HEK293 (cell line): ENCODE measurements at regions of chr19 and their contacts with region 1.

Region 1: GRCh38 chr19:51514866-51515481 is 13.4 kb upstream of the SIGLEC12 start:
- H3K4me3 ChIP-seq: no peak overlapping the region
- H3K27ac ChIP-seq: no peak overlapping the region
- H3K4me1 ChIP-seq: no peaks in the 10 kb centered on the region
- CTCF ChIP-seq: no peak

Region 2: GRCh38 chr19:51389143-51389542 is 125.8 kb before region 1 on chr19:
- CTCF ChIA-PET with region 1: no interaction called
- POLR2A ChIA-PET with region 1: no interaction called
- H3K4me3 ChIP-seq: no peak overlapping the region
- H3K27ac ChIP-seq: no peak overlapping the region
- H3K4me1 ChIP-seq: no peaks in the 10 kb centered on the region
- CTCF ChIP-seq: no peak

Region 3: DNA sequence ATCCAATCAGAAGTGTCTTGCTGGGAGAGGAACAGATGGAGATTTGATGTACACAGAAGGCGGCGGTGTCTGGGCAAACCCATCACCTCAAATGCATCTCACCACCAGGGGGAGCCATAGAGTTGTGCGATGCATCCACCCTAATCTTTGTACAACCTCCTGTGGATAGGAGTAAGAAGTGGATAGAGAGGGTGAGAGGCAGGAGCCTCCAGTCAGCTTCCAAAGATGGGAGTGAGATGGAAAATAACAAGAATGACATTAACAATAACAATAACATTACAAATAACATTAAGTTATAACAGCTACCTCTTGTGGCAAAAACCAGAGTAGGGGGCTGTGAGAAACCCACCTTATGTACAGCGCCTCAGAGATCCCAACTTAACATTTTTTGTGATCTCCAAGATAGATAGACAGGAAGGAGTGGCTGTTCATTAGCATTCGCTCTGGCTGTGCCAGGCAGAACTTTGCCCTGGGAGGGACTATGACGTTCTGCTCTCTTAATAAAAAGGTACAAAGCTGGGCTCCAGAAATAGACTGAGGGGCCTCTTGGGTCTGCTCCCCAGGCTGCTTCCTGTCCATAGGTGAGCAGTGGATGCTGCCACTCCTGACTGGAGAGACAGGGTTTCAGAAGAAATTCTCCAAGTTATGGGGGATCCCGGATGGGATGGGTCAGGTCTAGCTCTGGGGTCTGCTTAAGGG is 41.8 kb before region 1 on chr19:
- CTCF ChIA-PET with region 1: interaction called, 28 read pairs
- POLR2A ChIA-PET with region 1: no interaction called
- H3K4me3 ChIP-seq: no peak overlapping the region
- H3K27ac ChIP-seq: no peak overlapping the region
- H3K4me1 ChIP-seq: no peaks in the 10 kb centered on the region
- CTCF ChIP-seq: peak; percentile 71

Region 4: DNA sequence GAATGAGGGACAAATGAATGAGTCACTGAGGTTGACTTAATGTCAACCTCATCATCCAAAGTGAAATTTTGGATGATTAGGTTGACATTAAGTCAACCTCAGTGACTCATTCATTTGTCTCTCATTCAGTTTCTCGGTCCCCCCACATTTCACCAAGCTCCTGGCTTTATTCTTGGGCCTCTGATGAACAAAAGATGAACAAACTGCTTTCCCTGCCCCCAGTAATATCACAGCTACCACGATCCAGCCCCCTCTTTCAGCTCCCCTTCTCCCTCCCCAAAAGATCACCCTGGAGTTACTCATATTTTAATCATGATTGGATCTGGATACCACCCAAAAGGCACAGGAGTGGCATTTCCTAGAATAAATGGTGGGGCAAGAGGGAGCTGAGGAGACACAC is 25.9 kb before region 1 on chr19:
- CTCF ChIA-PET with region 1: interaction called, 11 read pairs
- POLR2A ChIA-PET with region 1: no interaction called
- H3K4me3 ChIP-seq: no peak overlapping the region
- H3K27ac ChIP-seq: no peak overlapping the region
- H3K4me1 ChIP-seq: no peaks in the 10 kb centered on the region
- CTCF ChIP-seq: no peak

Region 5: DNA sequence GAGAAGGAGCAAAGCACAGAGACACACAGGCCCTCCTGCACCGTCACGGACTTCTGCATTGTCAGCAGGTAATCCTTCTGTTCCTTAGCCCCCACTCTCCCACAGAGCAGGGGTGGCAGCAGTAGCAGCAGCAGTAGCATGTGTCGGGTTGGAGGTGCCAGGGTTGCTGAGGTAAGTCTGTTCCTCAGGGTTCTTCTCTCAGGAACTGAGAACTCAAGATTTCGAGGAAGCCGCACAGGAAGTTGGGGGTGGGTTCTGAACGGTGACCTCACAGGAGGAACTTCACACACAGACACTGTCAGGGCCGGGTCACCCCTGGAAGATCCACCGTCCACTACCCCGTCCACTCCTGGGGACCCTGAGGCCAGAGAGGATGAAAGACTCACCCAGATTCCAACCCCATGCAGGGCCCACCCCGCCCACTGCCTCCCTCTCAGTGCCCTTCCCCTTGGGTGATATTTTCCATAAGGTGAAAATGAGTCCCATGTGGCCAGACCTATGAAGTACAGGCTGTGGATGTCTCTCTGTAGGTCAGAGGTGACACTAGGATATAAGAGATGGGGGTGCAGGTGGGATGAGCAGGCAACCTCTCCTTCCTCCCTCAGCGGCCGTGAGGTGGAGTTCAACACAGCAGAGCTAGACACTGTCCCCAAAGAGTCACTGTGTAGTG is 13.2 kb before region 1 on chr19 and contains the start of gene SIGLEC12:
- CTCF ChIA-PET with region 1: interaction called, 48 read pairs
- POLR2A ChIA-PET with region 1: no interaction called
- H3K4me3 ChIP-seq: no peak within 1 kb of the TSS
- H3K27ac ChIP-seq: no peak within 1 kb of the TSS
- H3K4me1 ChIP-seq: no peaks in the 10 kb centered on the region
- CTCF ChIP-seq: no peak

Region 6: GRCh38 chr19:51546650-51547396 is 31.8 kb after region 1 on chr19:
- CTCF ChIA-PET with region 1: interaction called, 18 read pairs
- POLR2A ChIA-PET with region 1: no interaction called
- H3K4me3 ChIP-seq: no peak overlapping the region
- H3K27ac ChIP-seq: no peak overlapping the region
- H3K4me1 ChIP-seq: no peaks in the 10 kb centered on the region
- CTCF ChIP-seq: no peak

Region 7: DNA sequence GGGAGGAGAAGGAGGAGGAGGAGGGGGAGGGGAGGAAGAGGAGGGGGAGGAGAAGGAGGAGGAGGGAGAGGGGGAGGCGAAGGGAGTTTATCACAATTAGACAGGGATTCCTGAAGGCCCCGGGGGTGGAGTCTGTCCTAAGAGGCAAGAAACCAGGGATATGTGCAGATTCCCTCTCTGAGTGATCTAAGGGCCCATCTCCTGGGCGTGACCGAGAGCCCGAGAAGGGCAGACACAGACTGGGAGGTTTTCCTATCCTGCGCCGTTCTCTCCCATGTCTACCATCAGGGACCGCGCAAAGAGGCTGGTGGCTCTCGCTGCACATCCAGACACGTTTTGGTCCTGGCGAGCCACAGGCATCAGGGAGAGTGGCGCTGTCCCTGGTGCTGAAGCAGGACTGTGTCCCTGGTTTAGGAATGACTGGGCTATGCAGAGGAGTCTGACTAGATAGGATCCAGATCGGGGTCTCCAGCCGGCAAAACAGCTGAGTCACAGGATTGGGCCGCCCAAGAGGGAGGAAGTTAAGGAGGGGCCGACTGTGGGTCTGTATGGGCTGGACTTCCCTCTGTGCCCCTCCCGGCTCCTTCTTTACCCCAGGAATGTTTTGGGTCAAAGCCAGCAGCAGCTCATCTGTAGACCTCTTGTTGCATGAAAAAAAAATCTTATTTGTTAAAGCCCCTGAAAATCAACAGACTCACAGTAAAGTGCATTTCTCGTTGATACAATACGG is 38.2 kb after region 1 on chr19:
- CTCF ChIA-PET with region 1: interaction called, 18 read pairs
- POLR2A ChIA-PET with region 1: no interaction called
- H3K4me3 ChIP-seq: no peak overlapping the region
- H3K27ac ChIP-seq: no peak overlapping the region
- H3K4me1 ChIP-seq: no peaks in the 10 kb centered on the region
- CTCF ChIP-seq: no peak

Region 8: GRCh38 chr19:51576850-51577249 is 61.9 kb after region 1 on chr19:
- CTCF ChIA-PET with region 1: no interaction called
- POLR2A ChIA-PET with region 1: no interaction called
- H3K4me3 ChIP-seq: no peak overlapping the region
- H3K27ac ChIP-seq: no peak overlapping the region
- H3K4me1 ChIP-seq: no peaks in the 10 kb centered on the region
- CTCF ChIP-seq: no peak

Region 9: DNA sequence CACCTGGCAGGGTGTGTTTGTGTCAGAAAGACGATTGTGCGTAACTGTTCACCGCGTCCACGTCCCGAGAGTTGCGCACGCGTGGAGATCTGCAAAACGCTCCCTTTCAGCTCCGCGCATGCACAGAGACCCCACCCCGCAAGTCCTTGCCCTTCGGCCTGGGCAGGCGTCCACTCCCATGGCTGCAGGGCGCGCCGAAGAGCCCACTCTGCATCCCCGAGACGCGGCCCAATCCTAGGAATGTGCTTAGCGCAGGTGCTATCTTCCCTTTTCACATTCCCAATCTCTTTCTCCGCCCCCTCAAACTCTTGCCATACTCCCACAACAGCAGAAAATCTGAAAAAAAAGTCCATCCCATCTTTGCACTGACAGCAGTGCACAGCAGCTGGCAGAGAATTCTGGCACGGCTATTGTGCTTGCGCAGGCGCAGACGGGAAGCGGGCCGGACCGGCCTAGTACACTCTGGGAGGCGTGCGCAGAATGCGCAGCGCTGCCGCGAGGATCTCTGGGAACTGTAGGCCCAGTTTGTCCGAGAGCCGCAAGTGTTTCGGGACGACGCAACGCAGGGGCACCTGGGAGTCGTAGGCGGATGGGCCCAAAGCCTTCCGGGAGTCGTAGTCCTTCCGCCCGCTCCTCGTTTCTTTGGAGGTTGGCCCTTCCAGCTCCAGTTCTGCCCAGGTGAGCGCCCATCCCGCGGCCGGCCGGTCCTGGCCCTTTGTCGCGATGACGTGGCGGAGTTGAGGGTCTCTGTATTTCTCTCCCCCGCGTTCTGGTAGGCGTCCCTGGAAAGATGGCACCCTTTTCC is 79.2 kb after region 1 on chr19:
- CTCF ChIA-PET with region 1: no interaction called
- POLR2A ChIA-PET with region 1: no interaction called
- H3K4me3 ChIP-seq: peak overlapping the region; percentile 62
- H3K27ac ChIP-seq: peak overlapping the region; percentile 28; the same call in 1 of the 2 replicates
- H3K4me1 ChIP-seq: no peaks in the 10 kb centered on the region
- CTCF ChIP-seq: peak; percentile 9; the same call in 1 of the 2 replicates